Heart right ventricle (tissue), 16 donors: ENCODE measurements at regions of chr20 and their contacts with region 1.

Region 1: GRCh38 chr20:25254986-25255680 is 7.2 kb downstream of the PYGB start:
- DNase-seq: peak; percentile 59 to 80
- ATAC-seq: peak; percentile 84 to 95 (median 92)
- H3K4me3 ChIP-seq: no peak overlapping the region
- H3K27ac ChIP-seq: peak overlapping the region; percentile 51 to 98 (median 90)
- H3K4me1 ChIP-seq: peaks cover 9 to 92% (median 69%) of the 10 kb centered on the region in 9 donors
- H3K27me3 ChIP-seq: no peaks in the 10 kb centered on the region
- CTCF ChIP-seq: peak in 2 of 9 donors; percentile 22 to 35

Region 2: DNA sequence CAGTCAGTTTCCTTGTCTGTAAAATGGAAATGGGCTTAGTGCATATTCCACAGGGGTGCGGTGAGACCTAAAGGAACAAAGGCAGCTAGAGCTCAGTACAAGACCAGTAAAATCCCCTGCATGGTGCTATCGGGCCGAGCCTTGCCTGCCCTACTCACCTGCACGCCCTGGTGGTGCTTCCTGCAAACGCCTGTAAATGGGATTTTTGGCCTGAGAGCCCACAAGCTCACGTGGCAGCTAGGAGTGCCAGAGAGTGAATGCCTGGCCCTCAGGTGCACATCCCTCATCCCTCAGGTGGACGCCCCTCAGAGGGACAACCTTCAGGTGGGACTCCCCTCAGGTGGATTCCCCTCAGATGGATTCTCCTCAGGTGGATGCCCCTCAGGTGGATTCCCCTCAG is 125.2 kb before region 1 on chr20:
- intact Hi-C with region 1: no loop called
- DNase-seq: no peak
- ATAC-seq: no peak
- H3K4me3 ChIP-seq: no peak overlapping the region
- H3K27ac ChIP-seq: no peak overlapping the region
- H3K4me1 ChIP-seq: no peaks in the 10 kb centered on the region
- H3K27me3 ChIP-seq: peaks cover 0 to 7% (median 0%) of the 10 kb centered on the region in 7 donors
- CTCF ChIP-seq: no peak

Region 3: DNA sequence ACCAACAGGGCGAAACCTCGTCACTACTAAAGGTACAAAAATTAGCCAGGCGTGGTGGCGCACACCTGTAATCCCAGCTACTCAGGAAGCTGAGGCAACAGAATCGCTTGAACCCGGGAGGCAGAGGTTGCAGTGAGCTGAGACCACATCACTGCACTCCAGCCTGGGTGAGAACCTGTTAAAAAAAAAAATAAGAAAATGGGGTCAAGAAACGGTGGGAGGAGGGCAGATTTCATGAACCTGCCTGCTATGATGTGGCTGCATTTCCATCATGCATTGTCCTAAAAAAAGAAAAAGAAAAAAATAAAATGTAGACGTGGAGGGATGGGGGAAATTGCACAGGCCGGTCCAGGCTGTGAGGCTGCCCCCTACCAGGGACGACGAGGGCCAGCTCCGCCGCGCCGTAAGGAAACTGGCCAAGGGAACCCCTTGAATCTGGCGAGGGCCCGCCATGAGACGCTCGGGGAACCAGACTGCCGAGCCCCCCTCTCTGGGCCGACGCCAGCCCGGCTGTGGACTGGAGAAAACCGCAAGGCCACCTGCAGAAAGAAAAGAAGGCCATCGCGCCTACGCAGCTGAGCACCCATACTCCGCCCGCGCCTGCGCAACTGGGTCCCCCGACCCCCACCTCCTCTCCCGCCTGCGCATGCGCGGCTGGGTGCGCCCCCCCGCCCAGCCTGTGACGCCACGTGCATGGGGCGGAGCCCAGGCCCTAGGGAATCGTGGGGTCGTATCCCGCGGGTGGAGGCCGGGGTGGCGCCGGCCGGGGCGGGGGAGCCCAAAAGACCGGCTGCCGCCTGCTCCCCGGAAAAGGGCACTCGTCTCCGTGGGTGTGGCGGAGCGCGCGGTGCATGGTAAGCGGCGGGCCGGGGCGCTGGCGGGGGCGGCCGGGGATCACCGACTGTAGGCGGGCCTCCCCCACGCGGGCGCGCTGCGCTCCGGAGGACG is 59.8 kb before region 1 on chr20 and contains the start of gene ENTPD6:
- intact Hi-C with region 1: loop called in 1 of 10 experiments (anchors 10 kb)
- DNase-seq: peak; percentile 92 to 97
- ATAC-seq: peak; percentile 83 to 93 (median 92)
- H3K4me3 ChIP-seq: peak within 1 kb of the TSS; percentile 75 to 99 (median 92)
- H3K27ac ChIP-seq: peak within 1 kb of the TSS; percentile 84 to 97 (median 93)
- H3K4me1 ChIP-seq: peaks cover 15 to 72% (median 51%) of the 10 kb centered on the region in 9 donors
- H3K27me3 ChIP-seq: no peaks in the 10 kb centered on the region
- CTCF ChIP-seq: peak in 5 of 9 donors; percentile 13 to 51 (median 36)
- total RNA-seq, gene ENTPD6: 54.6 to 141 (median 78.0) TPM

Region 4: GRCh38 chr20:25273541-25274358 is 18.6 kb after region 1 on chr20:
- intact Hi-C with region 1: loop called in 1 of 10 experiments (anchors 2 kb)
- DNase-seq: peak in 1 of 2 donors; percentile 3
- ATAC-seq: peak in 1 of 8 donors; percentile 34
- H3K4me3 ChIP-seq: no peak overlapping the region
- H3K27ac ChIP-seq: peak overlapping the region in 8 of 10 donors; percentile 41 to 73 (median 52)
- H3K4me1 ChIP-seq: peaks cover 0 to 79% (median 43%) of the 10 kb centered on the region in 9 donors
- H3K27me3 ChIP-seq: no peaks in the 10 kb centered on the region
- CTCF ChIP-seq: no peak

Region 5: GRCh38 chr20:25294459-25295385 is 39.6 kb after region 1 on chr20:
- intact Hi-C with region 1: loop called in 1 of 10 experiments (anchors 5 kb)
- DNase-seq: peak in 1 of 2 donors; percentile 54
- ATAC-seq: peak; percentile 19 to 54 (median 44)
- H3K4me3 ChIP-seq: no peak overlapping the region
- H3K27ac ChIP-seq: peak overlapping the region; percentile 29 to 85 (median 67)
- H3K4me1 ChIP-seq: peaks cover 24 to 73% (median 44%) of the 10 kb centered on the region in 9 donors
- H3K27me3 ChIP-seq: no peaks in the 10 kb centered on the region
- CTCF ChIP-seq: peak; percentile 36 to 80 (median 63)

Region 6: DNA sequence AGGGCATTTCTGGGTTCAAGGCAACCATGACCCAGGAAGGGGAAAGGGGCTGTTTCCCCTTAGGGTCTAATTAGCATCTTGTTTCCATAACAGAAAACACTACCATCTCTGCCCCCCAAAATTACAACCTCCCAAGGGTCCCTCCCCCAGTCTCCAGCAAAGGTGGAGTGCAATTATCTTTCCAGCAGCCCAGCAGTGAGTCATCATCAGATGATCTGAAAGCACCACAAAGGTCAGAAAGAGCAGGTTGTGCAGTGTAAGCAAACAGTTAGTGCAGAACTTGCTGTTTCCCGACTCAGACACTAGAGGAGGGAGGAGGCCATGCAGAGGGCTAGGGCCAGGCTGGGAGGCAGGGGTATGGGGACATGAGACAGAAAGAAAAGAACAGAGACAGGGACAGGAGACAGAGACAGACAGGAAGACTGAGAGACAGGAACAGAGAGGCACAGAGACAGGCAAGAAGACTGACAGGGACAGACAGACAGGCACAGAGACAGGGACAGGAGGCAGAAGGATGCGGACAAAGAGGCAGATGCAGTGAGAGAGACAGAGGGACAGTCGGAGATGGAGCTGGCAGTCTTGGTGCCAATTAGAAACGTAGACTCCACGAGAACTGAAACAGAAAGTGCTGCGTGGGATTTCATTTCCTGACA is 55.3 kb after region 1 on chr20:
- intact Hi-C with region 1: loop called in 1 of 10 experiments (anchors 2 kb)
- DNase-seq: no peak
- ATAC-seq: peak; percentile 68 to 84 (median 82)
- H3K4me3 ChIP-seq: peak overlapping the region in 6 of 10 donors; percentile 9 to 30 (median 26)
- H3K27ac ChIP-seq: peak overlapping the region in 8 of 10 donors; percentile 19 to 86 (median 72)
- H3K4me1 ChIP-seq: peaks cover 15 to 38% (median 26%) of the 10 kb centered on the region in 9 donors
- H3K27me3 ChIP-seq: no peaks in the 10 kb centered on the region
- CTCF ChIP-seq: peak in 6 of 9 donors; percentile 18 to 56 (median 48)

Region 7: DNA sequence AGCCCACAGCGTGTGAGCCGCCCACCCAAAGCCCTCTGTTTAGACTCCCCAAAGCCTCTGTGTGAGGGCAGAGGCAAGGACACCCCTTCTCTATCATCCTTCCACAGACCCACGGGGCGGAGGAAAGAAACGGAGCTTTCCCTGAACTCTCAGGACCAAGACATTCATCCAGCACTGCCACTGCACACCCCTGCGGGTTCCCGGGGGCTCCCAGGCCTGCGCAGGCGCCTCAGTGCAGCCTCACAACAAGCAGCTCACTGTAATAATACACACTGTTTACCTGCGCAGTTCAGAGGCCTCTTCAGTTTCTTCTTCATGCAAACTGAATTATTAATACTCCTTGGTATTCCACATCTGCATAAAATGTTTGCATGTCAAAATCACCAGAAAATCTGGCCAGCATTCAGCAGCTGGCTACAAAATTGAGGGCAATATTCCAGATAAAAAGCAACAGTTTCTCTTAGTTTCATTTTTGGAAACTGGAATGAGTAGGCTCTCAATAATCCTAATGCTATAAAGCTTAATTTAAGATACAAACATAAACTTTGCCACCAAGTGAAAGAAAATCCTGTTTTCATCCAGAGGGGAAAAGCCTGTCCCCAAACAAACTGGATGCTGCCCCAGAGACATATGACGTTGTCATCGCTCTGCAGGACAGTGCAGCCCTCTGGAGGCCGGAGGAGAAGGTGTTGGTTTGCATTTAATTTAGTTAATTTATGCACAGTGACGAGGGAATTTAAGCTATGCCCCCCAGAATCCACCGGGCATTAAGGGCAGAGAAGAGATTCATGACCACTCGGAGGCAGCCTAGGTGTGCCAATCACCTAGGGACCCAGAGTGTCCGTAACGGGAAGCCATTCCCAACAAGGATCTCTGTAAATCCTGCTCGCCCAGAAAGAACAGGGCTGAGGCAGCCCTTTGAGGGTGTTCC is 284.9 kb after region 1 on chr20:
- intact Hi-C with region 1: no loop called
- DNase-seq: peak in 1 of 2 donors; percentile 27
- ATAC-seq: peak; percentile 50 to 83 (median 78)
- H3K4me3 ChIP-seq: peak overlapping the region; percentile 11 to 52 (median 42)
- H3K27ac ChIP-seq: peak overlapping the region in 9 of 10 donors; percentile 16 to 73 (median 56)
- H3K4me1 ChIP-seq: peaks cover 3 to 41% (median 14%) of the 10 kb centered on the region in 9 donors
- H3K27me3 ChIP-seq: no peaks in the 10 kb centered on the region
- CTCF ChIP-seq: peak in 8 of 9 donors; percentile 15 to 57 (median 38)